ENCODE measurements at regions of chr4 and their contacts with region 1.

Region 1: DNA sequence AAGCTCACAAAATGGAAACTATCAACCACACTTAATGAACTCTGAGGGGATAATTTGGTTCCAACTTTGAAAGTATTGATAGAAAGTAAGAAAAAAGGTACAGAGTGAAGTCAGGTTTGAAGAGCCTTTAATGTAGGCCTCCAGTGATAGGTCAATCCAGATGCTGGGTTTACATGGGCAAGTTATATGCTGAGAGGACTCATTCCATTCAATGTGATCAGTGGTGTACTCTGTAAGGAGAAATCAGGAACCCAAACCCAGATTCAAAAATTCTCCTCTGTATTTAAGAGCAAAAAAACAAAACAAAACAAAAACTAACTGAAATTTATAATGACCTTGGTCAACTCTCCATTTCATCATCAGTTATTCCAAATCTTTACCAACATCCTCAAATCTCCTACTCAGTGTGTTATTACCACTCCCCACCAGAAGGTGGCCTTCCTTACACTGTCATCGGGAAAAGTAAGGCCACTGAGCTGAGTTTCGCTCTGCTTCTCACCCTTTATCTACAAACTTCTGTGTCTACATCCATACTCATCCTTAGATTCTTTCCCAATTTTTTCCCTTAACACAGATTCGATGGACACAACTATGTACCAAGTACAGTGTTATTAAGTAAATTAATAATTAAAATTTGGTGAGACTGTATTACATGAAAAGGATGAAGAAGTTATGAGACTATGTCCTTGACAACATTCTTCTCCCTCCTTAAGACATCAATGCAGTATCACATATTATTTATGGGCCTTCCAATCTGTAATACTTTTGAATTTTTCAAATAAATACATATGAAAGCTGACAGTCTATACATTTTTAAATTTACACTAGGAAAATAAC is 88.3 kb downstream of the ZAR1 start:
- DNase-seq: peak; percentile 49 to 62 (median 55)
- H3K4me3 ChIP-seq: no peak overlapping the region
- H3K4me3 Mint-ChIP-seq: no peak overlapping the region
- H3K27ac ChIP-seq: no peak overlapping the region
- H3K27ac Mint-ChIP-seq: peak overlapping the region in 3 of 7 donors; percentile 17 to 39 (median 26)
- H3K4me1 ChIP-seq: no peaks in the 10 kb centered on the region
- H3K4me1 Mint-ChIP-seq: peaks cover 0 to 5% (median 1%) of the 10 kb centered on the region in 4 donors
- H3K27me3 ChIP-seq: no peaks in the 10 kb centered on the region
- H3K27me3 Mint-ChIP-seq: no peaks in the 10 kb centered on the region

Region 2: DNA sequence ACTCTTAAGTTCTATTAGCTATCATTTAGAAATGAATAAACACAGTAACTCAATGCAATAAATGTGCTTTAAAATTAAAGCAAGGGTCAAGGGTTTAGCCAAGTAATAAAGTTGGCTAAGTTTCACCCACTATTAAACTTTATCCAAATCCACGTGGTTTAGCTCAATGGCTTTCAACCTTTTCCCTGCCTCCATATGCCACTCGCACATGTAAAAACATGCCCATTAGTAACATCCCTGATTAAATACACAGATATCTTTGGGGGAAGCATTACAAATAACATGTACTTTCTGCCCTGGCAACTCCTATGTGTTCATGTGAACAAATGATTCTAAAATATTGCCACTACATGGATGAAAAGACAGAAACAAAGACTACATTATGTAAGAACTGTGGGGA is 42.5 kb after region 1 on chr4:
- CTCF ChIA-PET with region 1: interaction called, 14 read pairs
- POLR2A ChIA-PET with region 1: no interaction called
- intact Hi-C with region 1: no loop called
- DNase-seq: no peak
- H3K4me3 ChIP-seq: no peak overlapping the region
- H3K4me3 Mint-ChIP-seq: no peak overlapping the region
- H3K27ac ChIP-seq: no peak overlapping the region
- H3K27ac Mint-ChIP-seq: peak overlapping the region in 1 of 7 donors; percentile 25
- H3K4me1 ChIP-seq: peaks cover 5% of the 10 kb centered on the region
- H3K4me1 Mint-ChIP-seq: peaks cover 0 to 11% (median 6%) of the 10 kb centered on the region in 4 donors
- H3K27me3 ChIP-seq: no peaks in the 10 kb centered on the region
- H3K27me3 Mint-ChIP-seq: no peaks in the 10 kb centered on the region

Region 3: DNA sequence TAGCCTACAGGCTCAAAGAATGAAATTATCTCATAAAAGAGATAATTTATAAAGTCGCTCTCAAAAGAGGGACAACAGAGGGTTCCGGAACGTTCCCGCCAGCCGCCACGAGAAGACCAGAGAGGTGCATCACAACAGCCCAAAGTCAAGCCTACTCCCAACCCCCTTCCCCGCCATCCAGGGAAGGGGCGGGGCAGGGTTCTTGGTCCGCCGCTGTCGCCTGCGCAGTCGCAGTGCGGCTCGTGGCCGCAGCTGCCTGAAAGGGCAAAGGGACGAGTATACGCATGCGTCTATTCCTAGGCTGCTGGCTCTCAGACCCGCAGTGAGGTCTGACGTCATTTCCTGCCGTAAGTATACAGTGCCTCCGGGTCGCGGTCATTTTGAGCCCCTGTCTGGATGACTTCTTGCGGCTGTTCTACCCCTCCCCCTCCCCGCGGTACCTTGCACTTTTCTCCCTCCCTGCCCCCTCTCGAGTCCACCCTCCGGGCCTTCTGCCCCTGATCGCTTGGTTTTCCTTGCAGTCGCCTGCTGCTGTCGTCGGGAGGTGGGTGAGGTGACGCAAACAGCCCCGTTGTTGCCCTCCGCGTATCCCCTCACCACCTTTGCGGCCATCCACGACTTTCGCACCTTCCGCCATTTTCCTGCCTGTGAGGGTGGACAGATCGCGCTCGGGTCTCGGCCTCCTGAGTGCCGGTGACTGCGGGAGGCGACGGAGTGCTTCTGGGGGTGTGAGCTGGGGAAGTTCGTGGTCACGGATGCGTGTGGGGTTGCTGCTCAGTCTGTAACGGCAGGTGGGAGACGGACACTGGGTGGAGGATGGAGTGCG is 252.6 kb after region 1 on chr4 and contains the start of gene OCIAD1:
- CTCF ChIA-PET with region 1: interaction called, 7 read pairs
- POLR2A ChIA-PET with region 1: interaction called, 3 read pairs
- intact Hi-C with region 1: loop called (anchors 2 kb)
- DNase-seq: peak; percentile 91 to 99 (median 96)
- H3K4me3 ChIP-seq: peak within 1 kb of the TSS; percentile 92 to 100
- H3K4me3 Mint-ChIP-seq: peak within 1 kb of the TSS; percentile 100
- H3K27ac ChIP-seq: peak within 1 kb of the TSS; percentile 98
- H3K27ac Mint-ChIP-seq: peak within 1 kb of the TSS; percentile 99 to 100 (median 100)
- H3K4me1 ChIP-seq: peaks cover 25% of the 10 kb centered on the region
- H3K4me1 Mint-ChIP-seq: peaks cover 15 to 35% (median 28%) of the 10 kb centered on the region in 4 donors
- H3K27me3 ChIP-seq: no peaks in the 10 kb centered on the region
- H3K27me3 Mint-ChIP-seq: no peaks in the 10 kb centered on the region
- total RNA-seq, gene OCIAD1: 110 to 124 TPM

Region 4: DNA sequence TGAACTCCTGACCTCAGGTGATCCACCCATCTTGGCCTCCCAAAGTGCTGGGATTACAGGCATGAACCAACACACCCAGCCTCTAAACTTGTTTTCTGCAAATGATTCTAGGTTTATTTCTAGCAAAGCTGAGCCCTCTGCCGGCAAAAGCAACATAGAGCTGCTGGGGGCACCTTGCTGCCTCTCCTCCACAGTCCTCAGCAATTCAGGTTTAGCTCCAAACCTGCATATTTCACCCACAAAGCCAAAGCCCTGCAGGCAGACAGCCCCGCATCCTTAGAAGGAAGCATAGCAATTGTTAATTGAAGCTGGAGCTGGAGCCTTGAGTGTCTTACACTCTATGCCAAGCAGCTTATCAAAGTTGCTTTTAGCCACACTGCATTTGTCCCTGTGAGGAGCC is 353.1 kb after region 1 on chr4:
- CTCF ChIA-PET with region 1: interaction called, 15 read pairs
- POLR2A ChIA-PET with region 1: no interaction called
- intact Hi-C with region 1: no loop called
- DNase-seq: no peak
- H3K4me3 ChIP-seq: no peak overlapping the region
- H3K4me3 Mint-ChIP-seq: no peak overlapping the region
- H3K27ac ChIP-seq: no peak overlapping the region
- H3K27ac Mint-ChIP-seq: no peak overlapping the region
- H3K4me1 ChIP-seq: no peaks in the 10 kb centered on the region
- H3K4me1 Mint-ChIP-seq: peaks cover 0 to 3% (median 0%) of the 10 kb centered on the region in 4 donors
- H3K27me3 ChIP-seq: no peaks in the 10 kb centered on the region
- H3K27me3 Mint-ChIP-seq: no peaks in the 10 kb centered on the region

Region 5: GRCh38 chr4:48963042-48963679 is 384.8 kb after region 1 on chr4:
- CTCF ChIA-PET with region 1: interaction called, 94 read pairs
- POLR2A ChIA-PET with region 1: no interaction called
- intact Hi-C with region 1: loop called (anchors 1 kb)
- DNase-seq: peak; percentile 75 to 79 (median 76)
- H3K4me3 ChIP-seq: no peak overlapping the region
- H3K4me3 Mint-ChIP-seq: no peak overlapping the region
- H3K27ac ChIP-seq: no peak overlapping the region
- H3K27ac Mint-ChIP-seq: no peak overlapping the region
- H3K4me1 ChIP-seq: no peaks in the 10 kb centered on the region
- H3K4me1 Mint-ChIP-seq: no peaks in the 10 kb centered on the region
- H3K27me3 ChIP-seq: no peaks in the 10 kb centered on the region
- H3K27me3 Mint-ChIP-seq: peaks cover 1 to 4% of the 10 kb centered on the region in 2 donors